PC-9 (cell line): ENCODE measurements at regions of chr17 and their contacts with region 1.

Region 1: GRCh38 chr17:20226814-20227482 is 217.8 kb downstream of the SPECC1 start:
- DNase-seq: peak; percentile 42 to 76
- H3K4me3 ChIP-seq: no peak overlapping the region
- H3K27ac ChIP-seq: 0 out of 2 replicates have a peak overlapping the region, but pooled peaks have one; percentile 13
- H3K4me1 ChIP-seq: peaks cover 21% of the 10 kb centered on the region
- H3K27me3 ChIP-seq: no peaks in the 10 kb centered on the region
- CTCF ChIP-seq: peak; percentile 91

Region 2: DNA sequence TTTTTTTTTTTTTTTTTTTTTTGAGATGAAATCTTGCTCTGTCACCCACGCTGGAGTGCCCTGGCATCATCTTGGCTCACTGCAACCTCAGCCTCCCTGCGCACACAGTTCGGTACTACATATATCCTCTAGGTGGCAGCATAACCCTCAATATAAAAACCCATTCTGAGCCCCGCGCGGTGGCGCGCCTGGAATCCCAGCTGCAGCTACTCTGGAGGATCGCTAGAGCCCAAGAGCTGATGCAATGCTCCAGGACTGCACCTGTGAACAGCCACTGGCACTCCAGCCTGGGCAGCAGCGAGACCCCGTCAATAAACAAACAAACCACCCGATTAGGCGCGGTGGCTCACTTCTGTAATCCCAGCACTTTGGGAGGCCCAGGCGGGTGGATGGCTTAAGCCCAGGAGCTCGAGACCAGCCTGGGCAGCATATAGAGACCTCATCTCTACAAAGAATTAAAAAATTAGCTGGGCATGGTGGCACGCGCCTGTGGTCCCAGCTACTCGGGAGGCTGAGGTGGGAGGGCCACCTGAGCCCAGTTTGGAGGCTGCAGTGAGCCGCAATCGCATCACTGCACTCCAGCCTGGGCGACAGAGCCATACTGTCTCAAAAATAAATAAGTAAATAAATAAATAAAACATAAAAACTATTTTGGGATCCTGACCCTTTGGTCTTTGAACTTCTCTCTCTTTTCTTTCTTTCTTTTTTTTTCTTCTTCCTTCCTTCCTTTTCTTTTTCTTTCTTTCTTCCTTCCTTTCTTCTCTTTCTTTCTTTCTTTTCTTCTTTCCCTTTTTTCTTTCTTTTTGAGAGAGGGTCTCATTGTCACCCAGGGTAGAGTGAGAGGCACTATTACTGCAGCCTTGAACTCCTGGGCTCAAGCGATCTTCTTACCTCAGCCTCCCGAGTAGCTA is 233.9 kb before region 1 on chr17:
- CTCF ChIA-PET with region 1: interaction called, 4 read pairs
- POLR2A ChIA-PET with region 1: no interaction called
- intact Hi-C with region 1: loop called (anchors 5 kb)
- DNase-seq: peak; percentile 87 to 92
- H3K4me3 ChIP-seq: peak overlapping the region; percentile 42; the same call in 1 of the 2 replicates
- H3K27ac ChIP-seq: peak overlapping the region; percentile 16; the same call in 1 of the 2 replicates
- H3K4me1 ChIP-seq: no peaks in the 10 kb centered on the region
- H3K27me3 ChIP-seq: no peaks in the 10 kb centered on the region
- CTCF ChIP-seq: peak; percentile 88

Region 3: DNA sequence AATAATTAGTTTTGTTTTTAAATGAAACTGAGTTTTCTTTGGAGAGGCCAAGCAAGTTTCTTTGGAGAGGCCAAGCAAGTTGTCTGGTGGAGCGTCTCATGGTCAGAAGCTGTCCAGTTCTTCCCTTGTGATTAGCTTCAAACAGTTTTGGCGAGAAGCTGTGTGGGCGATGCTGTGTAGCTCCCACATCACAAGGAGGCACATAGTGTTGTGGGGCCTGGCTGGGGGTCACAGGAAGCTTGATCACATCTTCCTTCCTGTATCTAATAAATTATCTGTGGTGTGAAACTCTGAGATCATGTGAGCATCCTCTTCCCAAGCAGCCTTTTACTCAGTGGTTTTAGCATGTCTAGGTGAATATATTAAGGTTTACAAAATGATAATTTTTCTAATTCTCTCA is 183.9 kb before region 1 on chr17:
- CTCF ChIA-PET with region 1: no interaction called
- POLR2A ChIA-PET with region 1: no interaction called
- intact Hi-C with region 1: no loop called
- DNase-seq: no peak
- H3K4me3 ChIP-seq: no peak overlapping the region
- H3K27ac ChIP-seq: no peak overlapping the region
- H3K4me1 ChIP-seq: no peaks in the 10 kb centered on the region
- H3K27me3 ChIP-seq: no peaks in the 10 kb centered on the region
- CTCF ChIP-seq: no peak

Region 4: GRCh38 chr17:20155258-20156195 is 71.4 kb before region 1 on chr17:
- CTCF ChIA-PET with region 1: no interaction called
- POLR2A ChIA-PET with region 1: no interaction called
- intact Hi-C with region 1: loop called (anchors 2 kb)
- DNase-seq: peak; percentile 95 to 100
- H3K4me3 ChIP-seq: peak overlapping the region; percentile 92
- H3K27ac ChIP-seq: peak overlapping the region; percentile 88
- H3K4me1 ChIP-seq: peaks cover 31% of the 10 kb centered on the region
- H3K27me3 ChIP-seq: no peaks in the 10 kb centered on the region
- CTCF ChIP-seq: no peak

Region 5: DNA sequence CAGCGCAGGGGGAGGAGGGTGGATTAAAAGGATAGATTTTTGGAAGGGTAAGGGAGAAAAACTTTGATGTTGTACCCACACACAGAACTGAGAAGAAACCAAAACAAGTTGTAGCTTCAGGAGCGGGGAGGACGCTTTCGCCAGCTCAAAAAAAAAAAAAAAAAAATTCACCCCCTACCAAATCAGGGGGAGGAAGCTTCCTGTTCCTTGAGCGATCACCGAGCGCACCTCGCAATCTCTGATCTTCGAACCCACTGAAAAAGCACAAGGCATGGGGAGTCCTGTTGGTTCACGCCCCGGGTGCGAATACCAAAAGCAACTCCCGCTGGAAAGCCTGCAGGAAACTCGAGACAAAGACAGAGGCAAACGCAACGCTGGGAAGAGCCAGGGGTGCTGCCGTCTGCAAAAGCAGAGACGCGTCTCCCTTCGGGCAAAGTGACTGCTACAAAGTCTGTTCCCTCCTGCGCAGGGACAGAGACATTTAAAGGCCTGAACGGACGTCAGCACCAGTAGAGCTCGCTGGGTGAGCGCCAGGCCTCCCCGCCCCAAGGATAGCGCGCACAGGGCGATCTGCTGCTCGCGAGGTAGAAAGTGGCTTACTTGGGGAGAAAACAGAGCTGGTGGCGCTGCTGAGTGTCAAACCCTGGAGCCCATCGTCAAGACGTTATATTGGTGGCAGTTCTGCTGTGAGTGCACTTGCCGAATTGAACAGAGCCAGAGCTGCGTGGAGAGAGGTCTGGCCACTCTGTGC is 625.5 kb after region 1 on chr17:
- CTCF ChIA-PET with region 1: no interaction called
- POLR2A ChIA-PET with region 1: no interaction called
- intact Hi-C with region 1: loop called (anchors 10 kb)
- DNase-seq: peak; percentile 42 to 61
- H3K4me3 ChIP-seq: peak overlapping the region; percentile 63
- H3K27ac ChIP-seq: no peak overlapping the region
- H3K4me1 ChIP-seq: peaks cover 8% of the 10 kb centered on the region; the same call in 1 of the 2 replicates
- H3K27me3 ChIP-seq: no peaks in the 10 kb centered on the region
- CTCF ChIP-seq: no peak